Common myeloid progenitor, CD34-positive (primary cell): ENCODE measurements at regions of chr14 and their contacts with region 1.

Region 1: GRCh38 chr14:103880348-103881267 is 33.2 kb upstream of the PPP1R13B start:
- DNase-seq: peak; percentile 88 to 94 (median 93)
- H3K4me3 ChIP-seq: peak overlapping the region in 5 of 7 experiments; percentile 13 to 71 (median 51)
- H3K27ac ChIP-seq: no peak overlapping the region
- H3K4me1 ChIP-seq: peaks cover 0 to 29% (median 25%) of the 10 kb centered on the region in 4 experiments
- H3K27me3 ChIP-seq: peaks cover 0 to 19% (median 0%) of the 10 kb centered on the region in 5 experiments

Region 2: DNA sequence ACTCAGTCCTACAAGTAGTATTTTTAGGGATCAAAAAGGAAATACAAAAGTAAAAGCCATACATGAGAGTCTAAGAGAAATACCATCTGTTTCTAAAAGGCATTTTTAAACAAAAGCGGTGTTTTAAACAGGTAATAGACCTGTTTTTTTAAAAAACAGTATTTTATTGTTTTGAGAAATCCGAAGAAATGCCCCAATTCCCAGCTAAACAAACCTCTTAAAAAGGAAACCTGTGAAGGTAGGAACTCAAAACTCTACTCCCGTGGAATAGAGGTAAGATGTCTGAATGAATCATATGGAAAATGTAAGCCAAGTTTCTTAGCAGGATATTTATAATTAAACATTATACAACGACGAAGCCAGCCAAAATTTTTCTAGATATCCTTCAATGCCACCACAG is 35.3 kb before region 1 on chr14:
- CTCF ChIA-PET with region 1: interaction called, 12 read pairs
- POLR2A ChIA-PET with region 1: no interaction called
- DNase-seq: no peak
- H3K4me3 ChIP-seq: no peak overlapping the region
- H3K27ac ChIP-seq: no peak overlapping the region
- H3K4me1 ChIP-seq: peaks cover 0 to 22% (median 18%) of the 10 kb centered on the region in 4 experiments
- H3K27me3 ChIP-seq: peaks cover 3 to 56% (median 25%) of the 10 kb centered on the region in 5 experiments

Region 3: DNA sequence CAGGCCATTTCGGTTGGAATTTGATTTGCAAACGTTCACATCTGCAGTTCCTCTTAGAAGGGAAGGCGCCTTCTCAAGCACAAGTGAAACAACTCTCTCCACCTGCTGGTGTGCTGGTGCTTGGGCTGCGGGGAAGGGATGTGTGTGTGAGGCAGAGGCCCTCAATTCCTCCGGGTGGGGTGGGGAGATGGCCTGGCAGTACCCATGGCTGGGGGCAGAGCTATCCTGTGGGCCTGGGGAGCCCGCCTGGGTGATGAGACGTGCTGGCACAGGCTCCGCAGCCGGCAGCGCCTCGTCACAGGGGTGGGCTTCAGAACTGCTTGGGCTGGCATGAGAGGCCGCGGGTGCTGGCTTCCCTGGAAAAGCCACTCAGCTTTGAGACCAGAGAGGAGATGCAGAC is 18.7 kb after region 1 on chr14:
- CTCF ChIA-PET with region 1: interaction called, 19 read pairs
- POLR2A ChIA-PET with region 1: no interaction called
- DNase-seq: peak in 2 of 3 donors; percentile 37 to 45
- H3K4me3 ChIP-seq: no peak overlapping the region
- H3K27ac ChIP-seq: no peak overlapping the region
- H3K4me1 ChIP-seq: peaks cover 0 to 2% (median under 1%) of the 10 kb centered on the region in 4 experiments
- H3K27me3 ChIP-seq: peaks cover 0 to 6% (median 0%) of the 10 kb centered on the region in 5 experiments